ENCODE measurements at regions of chr2 and their contacts with region 1.

Region 1: GRCh38 chr2:135531231-135532228 is at the start of gene R3HDM1:
- DNase-seq: peak; percentile 95 to 100 (median 99)
- ATAC-seq: peak; percentile 97
- H3K4me3 ChIP-seq: peak within 1 kb of the TSS; percentile 61 to 92 (median 80)
- H3K27ac ChIP-seq: peak within 1 kb of the TSS; percentile 82 to 97 (median 93)
- H3K4me1 ChIP-seq: peaks cover 0 to 21% (median 7%) of the 10 kb centered on the region in 12 donors
- H3K27me3 ChIP-seq: no peaks in the 10 kb centered on the region
- CTCF ChIP-seq: peak in 3 of 12 donors; percentile 13 to 24 (median 16)
- POLR2A ChIP-seq: peak in 1 of 2 donors; percentile 61
- total RNA-seq, gene R3HDM1: 11.3 to 24.3 (median 18.5) TPM

Region 2: DNA sequence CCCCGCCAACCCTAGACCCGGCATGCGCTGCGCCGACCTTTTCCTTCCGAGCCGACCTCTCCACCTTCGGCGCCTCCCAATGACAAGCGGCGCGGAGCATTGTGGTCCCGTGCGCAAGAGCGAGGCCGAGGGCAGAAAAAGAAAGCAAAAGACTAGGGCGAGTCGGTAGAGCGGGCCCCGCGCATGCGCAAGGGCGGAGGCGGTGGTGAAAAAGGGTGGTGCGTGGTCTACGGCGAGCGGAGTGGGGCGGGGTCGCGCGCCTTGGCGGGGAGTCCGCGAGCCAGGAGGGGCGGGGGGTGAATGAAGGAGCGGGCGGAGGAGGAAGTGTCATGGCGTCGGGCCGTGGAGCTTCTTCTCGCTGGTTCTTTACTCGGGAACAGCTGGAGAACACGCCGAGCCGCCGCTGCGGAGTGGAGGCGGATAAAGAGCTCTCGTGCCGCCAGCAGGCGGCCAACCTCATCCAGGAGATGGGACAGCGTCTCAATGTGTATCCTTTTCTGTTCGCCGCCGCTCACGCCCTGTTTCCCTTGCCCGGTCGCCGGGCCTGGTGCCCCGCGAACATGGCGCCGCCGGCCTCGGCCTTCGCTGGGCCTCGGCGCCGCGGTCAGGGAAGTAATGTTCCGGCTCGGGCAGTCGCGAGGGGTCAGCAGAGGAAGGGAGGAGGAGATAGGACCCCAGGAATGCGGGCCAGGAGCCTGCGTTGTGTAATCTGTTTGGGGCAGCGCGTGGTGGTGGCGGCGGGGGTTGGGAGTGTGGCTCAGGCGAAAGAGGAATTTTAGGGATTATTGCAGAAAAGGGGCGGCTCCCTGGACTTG is 612.8 kb before region 1 on chr2 and contains the start of gene CCNT2:
- intact Hi-C with region 1: loop called in 3 of 10 experiments (anchors 5 kb)
- DNase-seq: peak; percentile 100
- ATAC-seq: peak; percentile 94 to 95 (median 95)
- H3K4me3 ChIP-seq: peak within 1 kb of the TSS; percentile 56 to 95 (median 89)
- H3K27ac ChIP-seq: peak within 1 kb of the TSS; percentile 83 to 99 (median 98)
- H3K4me1 ChIP-seq: peaks cover 8 to 51% (median 45%) of the 10 kb centered on the region in 12 donors
- H3K27me3 ChIP-seq: no peaks in the 10 kb centered on the region
- CTCF ChIP-seq: peak in 4 of 12 donors; percentile 6 to 28 (median 14)
- POLR2A ChIP-seq: no peak
- total RNA-seq, gene CCNT2: 11.9 to 26.8 (median 20.1) TPM

Region 3: DNA sequence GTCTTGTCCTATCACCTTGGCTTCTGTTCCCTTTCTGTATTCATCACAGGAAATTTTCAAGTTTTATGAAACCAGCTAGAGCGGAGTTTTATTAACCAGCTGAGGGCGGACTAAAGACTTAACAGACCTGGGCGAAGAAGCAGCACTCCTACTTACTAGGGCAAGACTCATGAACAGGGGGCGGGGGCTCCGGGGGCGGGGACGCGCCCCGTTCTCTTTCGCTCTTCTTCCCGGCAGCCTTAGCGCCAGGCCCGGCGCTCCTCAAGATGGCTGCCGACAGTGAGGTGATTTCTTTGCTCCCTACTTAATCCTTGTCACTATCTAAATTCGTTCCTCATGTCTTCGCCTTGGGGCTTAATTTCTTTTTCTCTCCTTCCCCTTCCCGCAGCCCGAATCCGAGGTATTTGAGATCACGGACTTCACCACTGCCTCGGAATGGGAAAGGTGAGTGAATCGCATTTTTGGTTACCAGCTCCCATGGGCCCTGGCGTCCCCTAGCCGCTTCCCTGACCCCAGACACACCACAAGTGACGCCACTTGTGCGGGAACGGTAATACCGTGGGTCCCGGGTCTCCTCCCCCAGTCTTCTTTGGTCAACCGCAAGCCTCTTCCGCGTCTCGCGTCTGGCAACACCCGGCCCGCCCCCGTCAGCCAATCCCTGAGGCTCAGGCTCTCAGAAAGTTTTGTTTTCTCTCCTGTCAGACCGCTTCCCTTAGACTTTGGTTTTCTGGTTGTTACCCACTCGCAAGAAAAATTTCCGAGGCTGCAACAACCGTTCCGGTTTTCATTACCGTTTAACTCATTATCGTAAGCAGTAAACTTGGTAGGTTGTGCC is 479.3 kb before region 1 on chr2 and contains the start of gene RAB3GAP1:
- intact Hi-C with region 1: loop called in 2 of 10 experiments (anchors 2 to 5 kb)
- DNase-seq: peak; percentile 76 to 89 (median 79)
- ATAC-seq: peak; percentile 79 to 94 (median 94)
- H3K4me3 ChIP-seq: peak within 1 kb of the TSS; percentile 64 to 89 (median 77)
- H3K27ac ChIP-seq: peak within 1 kb of the TSS; percentile 61 to 98 (median 94)
- H3K4me1 ChIP-seq: peaks cover 4 to 47% (median 32%) of the 10 kb centered on the region in 12 donors
- H3K27me3 ChIP-seq: no peaks in the 10 kb centered on the region
- CTCF ChIP-seq: no peak
- POLR2A ChIP-seq: peak in 1 of 2 donors; percentile 20
- total RNA-seq, gene RAB3GAP1: 40.6 to 63.6 (median 56.4) TPM

Region 4: DNA sequence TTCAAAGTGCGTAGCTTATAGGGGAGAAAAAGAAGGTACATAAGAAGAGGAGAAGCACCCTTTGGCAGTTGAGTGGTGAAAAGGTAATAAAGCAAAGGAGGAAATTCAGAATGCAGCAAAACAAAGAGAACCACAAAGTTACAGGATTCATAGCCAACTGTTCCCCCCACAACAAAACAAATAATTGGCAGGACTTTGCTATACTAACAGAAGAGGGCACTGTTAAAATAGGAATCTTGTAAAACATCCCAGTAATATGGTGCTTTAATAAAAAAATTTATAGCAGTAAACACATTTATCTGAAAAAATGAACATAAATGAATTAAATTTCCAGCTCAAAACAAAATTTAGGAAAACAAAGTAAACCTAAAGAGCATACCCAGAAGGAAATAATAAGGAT is 42.1 kb after region 1 on chr2:
- intact Hi-C with region 1: no loop called
- DNase-seq: no peak
- ATAC-seq: no peak
- H3K4me3 ChIP-seq: no peak overlapping the region
- H3K27ac ChIP-seq: no peak overlapping the region
- H3K4me1 ChIP-seq: no peaks in the 10 kb centered on the region
- H3K27me3 ChIP-seq: no peaks in the 10 kb centered on the region
- CTCF ChIP-seq: no peak
- POLR2A ChIP-seq: no peak

Region 5: DNA sequence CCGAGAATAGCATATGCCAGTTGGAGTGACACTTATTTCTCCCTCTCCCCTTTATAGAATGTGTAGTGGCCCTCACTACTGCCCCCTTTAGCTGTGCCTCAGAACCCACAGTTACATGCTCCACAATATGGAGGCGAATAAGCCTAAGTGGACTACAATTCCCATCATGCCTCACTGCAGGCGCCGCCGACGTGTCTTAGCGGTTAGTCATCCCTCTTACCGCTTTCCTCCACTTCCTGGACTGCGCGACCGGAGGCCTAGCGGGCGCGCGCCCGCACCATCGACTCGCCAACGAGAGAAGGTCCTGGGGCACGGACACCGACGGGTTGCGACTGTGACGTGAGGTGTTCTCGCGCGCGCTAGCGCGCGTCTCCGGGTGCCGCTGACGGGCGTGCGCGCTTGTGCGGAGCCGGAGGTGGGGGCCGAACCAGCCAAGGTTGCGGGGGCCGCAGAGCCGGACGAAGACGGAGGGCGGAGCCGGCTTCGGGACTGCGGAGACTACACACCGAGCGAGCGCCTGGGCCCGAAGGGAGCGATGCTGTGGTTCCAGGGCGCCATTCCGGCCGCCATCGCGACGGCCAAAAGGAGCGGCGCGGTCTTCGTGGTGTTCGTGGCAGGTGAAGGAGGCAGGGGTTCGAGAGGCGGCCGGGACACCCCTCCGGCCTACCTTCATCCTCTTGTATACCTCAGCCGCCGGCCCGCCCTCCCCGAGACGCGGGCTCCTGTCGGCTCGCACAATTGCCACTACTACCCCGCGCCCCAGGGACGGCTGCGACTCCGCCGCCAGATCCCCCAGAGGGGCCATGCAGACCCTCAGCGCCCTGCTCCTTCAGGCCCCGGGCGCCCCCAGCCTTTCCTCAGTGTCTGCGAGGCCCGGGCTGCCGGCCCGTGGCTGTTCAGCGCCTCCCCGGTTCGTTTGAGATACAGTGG is 210.1 kb after region 1 on chr2 and contains the start of gene UBXN4:
- intact Hi-C with region 1: loop called in 4 of 10 experiments (anchors 2 to 10 kb)
- DNase-seq: peak; percentile 98 to 99 (median 98)
- ATAC-seq: peak; percentile 97 to 100 (median 98)
- H3K4me3 ChIP-seq: peak within 1 kb of the TSS; percentile 50 to 100 (median 89)
- H3K27ac ChIP-seq: peak within 1 kb of the TSS; percentile 86 to 100 (median 98)
- H3K4me1 ChIP-seq: peaks cover 0 to 35% (median 26%) of the 10 kb centered on the region in 12 donors
- H3K27me3 ChIP-seq: no peaks in the 10 kb centered on the region
- CTCF ChIP-seq: peak in 9 of 12 donors; percentile 20 to 55 (median 41)
- POLR2A ChIP-seq: peak; percentile 71 to 82
- total RNA-seq, gene UBXN4: 30.9 to 90.5 (median 57.0) TPM

Measured in heart left ventricle (tissue), 16 donors.